ENCODE measurements at regions of chr17 and their contacts with region 1.

Region 1: GRCh38 chr17:50865984-50866774 is at the start of gene TOB1:
- DNase-seq: peak in 1 of 2 donors; percentile 98
- H3K4me3 ChIP-seq: peak within 1 kb of the TSS; percentile 82 to 92
- H3K27ac ChIP-seq: peak within 1 kb of the TSS; percentile 100
- H3K4me1 ChIP-seq: peaks cover 43% of the 10 kb centered on the region
- H3K27me3 ChIP-seq: no peaks in the 10 kb centered on the region
- CTCF ChIP-seq: no peak
- POLR2A ChIP-seq: peak; percentile 29 to 100
- total RNA-seq, gene TOB1: 74.4 TPM

Region 2: DNA sequence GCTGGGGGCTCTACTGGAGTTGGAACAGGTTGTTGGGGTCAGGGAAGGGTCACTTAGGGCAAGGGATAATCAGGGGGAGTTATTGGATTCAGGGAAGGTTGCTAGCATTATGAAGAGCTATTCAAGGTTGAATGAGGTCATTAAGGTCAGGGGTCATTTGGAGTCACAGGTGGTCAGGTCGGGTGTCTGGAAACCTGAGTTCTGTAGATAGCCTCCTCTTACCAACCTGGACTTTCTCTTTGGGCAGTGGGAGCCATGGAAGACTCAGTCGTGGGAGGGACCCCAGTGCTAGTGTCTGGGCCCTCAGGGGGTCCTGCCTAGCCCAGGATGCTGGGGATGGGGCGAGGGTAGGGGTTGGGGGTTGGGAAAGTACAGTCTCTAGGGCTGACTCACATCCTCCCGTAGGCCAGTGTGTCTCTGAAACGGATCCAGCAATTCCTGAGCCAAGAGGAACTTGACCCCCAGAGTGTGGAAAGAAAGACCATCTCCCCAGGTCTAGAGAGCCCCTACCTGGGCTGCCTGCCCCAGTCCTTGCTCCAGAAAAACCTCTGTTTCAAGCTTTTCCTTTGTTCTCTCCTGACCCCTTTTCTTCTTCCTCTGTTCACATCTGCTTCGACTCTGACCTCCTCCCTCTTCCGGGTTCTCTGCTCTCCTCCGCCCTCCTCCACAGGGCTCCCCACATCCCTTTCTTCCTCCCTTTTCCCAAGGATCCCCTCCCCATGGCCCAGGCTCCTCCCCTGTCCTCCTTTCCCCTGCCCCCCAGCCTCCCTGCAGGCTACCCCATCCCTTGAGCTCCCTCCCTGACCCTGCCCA is 197.9 kb before region 1 on chr17:
- intact Hi-C with region 1: no loop called
- DNase-seq: no peak
- H3K4me3 ChIP-seq: no peak overlapping the region
- H3K27ac ChIP-seq: no peak overlapping the region
- H3K4me1 ChIP-seq: peaks cover 17% of the 10 kb centered on the region
- H3K27me3 ChIP-seq: no peaks in the 10 kb centered on the region
- CTCF ChIP-seq: no peak
- POLR2A ChIP-seq: no peak

Region 3: DNA sequence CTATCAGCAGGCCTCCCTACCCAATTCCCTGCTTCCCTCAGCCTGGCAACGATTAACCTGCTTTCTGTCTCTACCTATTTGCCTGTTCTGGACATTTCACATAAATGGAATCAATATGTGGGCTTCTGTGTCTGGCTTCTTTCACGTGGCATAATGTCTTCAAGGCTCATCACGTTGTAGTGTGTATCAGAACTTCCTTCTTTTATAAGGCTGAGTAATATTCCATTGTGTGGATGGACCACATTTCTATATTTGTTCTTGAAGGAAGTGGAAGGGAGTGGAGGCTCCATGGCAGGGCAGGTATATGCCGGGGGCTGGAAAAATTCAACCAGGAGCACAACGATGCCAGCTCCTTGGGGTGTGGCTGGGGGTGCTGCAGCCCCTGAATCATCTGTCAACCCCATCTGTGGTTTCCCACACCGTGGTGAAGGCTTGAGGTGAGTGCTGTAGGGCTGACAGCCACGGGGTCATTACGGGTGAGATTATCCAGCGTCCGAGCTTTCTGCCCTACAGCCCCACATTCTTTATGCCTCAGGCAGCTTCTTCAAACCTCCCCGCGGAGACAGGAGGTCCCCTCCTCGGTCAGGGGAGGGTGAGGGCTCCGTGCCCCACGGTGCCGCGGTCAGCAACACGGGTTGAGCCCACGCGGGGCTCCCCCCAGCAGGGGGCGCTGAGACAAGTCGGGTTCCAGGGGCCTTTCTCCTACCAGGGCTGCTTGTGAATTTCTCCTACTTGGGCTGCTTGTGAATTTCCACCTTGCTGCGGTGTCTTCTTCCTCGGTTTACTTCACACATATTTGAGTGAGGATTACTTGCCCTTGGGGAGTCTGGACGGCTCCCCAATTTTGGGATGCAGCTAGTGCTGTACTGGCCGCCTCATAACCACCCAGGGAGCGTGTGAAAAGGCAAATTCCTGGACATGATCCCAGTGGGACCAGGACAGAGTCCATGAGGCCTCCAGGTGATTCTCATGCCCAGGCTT is 49.1 kb before region 1 on chr17:
- intact Hi-C with region 1: no loop called
- DNase-seq: no peak
- H3K4me3 ChIP-seq: no peak overlapping the region
- H3K27ac ChIP-seq: no peak overlapping the region
- H3K4me1 ChIP-seq: peaks cover 7% of the 10 kb centered on the region
- H3K27me3 ChIP-seq: no peaks in the 10 kb centered on the region
- CTCF ChIP-seq: peak; percentile 30 to 52 (median 43)
- POLR2A ChIP-seq: no peak

Region 4: GRCh38 chr17:50904521-50905459 is 38.6 kb after region 1 on chr17:
- intact Hi-C with region 1: loop called (anchors 5 kb)
- DNase-seq: no peak
- H3K4me3 ChIP-seq: no peak overlapping the region
- H3K27ac ChIP-seq: peak overlapping the region; percentile 95
- H3K4me1 ChIP-seq: peaks cover 42% of the 10 kb centered on the region
- H3K27me3 ChIP-seq: no peaks in the 10 kb centered on the region
- CTCF ChIP-seq: no peak
- POLR2A ChIP-seq: no peak

Region 5: DNA sequence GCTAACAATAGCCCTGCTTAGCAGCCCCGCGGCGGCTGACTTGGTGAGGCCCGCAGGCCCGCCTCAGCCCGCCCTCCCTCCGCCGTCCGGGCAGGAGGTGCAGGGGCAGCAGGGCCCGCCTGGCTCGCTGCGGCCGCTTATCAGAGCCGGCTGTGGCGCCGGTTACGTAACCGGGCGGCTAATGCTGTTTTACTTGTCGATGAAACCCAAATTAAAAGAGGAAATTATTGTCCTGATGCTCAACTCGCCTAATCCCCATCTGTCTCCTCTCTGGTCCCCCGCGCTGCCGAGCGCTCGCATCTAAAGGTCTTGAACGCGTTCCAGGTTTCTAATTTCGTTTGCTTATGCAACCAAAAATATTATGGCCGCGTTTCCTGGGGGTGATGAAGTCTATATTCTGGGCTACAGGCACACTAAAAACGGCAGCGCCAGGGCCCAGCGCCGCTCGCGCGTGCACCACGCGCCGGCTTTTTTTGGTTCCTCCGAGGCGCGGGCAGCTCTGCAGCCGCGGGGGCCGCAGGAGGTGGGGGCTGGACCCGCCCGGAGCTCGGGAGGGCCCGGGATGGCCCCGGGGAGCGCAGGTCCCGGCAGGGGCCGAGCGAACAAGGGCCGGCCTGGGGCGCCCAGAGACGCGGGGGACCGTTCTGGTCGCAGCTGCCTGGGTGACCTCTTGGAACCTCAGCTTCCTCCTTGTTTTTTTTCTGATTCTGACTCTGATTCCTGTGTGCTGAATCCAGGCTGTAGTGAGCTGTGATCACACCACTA is 65.1 kb after region 1 on chr17:
- intact Hi-C with region 1: loop called (anchors 2 kb)
- DNase-seq: no peak
- H3K4me3 ChIP-seq: peak overlapping the region; percentile 40 to 46
- H3K27ac ChIP-seq: peak overlapping the region; percentile 96
- H3K4me1 ChIP-seq: peaks cover 23% of the 10 kb centered on the region
- H3K27me3 ChIP-seq: no peaks in the 10 kb centered on the region
- CTCF ChIP-seq: no peak
- POLR2A ChIP-seq: no peak

Region 6: GRCh38 chr17:50949989-50950881 is 84.1 kb after region 1 on chr17:
- intact Hi-C with region 1: loop called (anchors 5 kb)
- DNase-seq: peak in 1 of 2 donors; percentile 96
- H3K4me3 ChIP-seq: peak overlapping the region in 1 of 2 donors; percentile 12
- H3K27ac ChIP-seq: peak overlapping the region; percentile 93
- H3K4me1 ChIP-seq: peaks cover 52% of the 10 kb centered on the region
- H3K27me3 ChIP-seq: no peaks in the 10 kb centered on the region
- CTCF ChIP-seq: peak; percentile 26 to 77 (median 40)
- POLR2A ChIP-seq: peak in 1 of 2 donors; percentile 3

Measured in vagina (tissue), 2 donors.